ENCODE measurements at regions of chr13 and their contacts with region 1.

Region 1: GRCh38 chr13:21476893-21477472 is 17.9 kb upstream of the ZDHHC20 start:
- DNase-seq: peak; percentile 60 to 81 (median 66)
- ATAC-seq: peak; percentile 92
- H3K4me3 ChIP-seq: no peak overlapping the region
- H3K27ac ChIP-seq: no peak overlapping the region
- H3K4me1 ChIP-seq: no peaks in the 10 kb centered on the region
- H3K27me3 ChIP-seq: no peaks in the 10 kb centered on the region
- CTCF ChIP-seq: peak; percentile 77 to 86 (median 85)
- EP300 ChIP-seq: no peak
- POLR2A ChIP-seq: no peak
- RAD21 ChIP-seq: peak; percentile 35 to 69; a peak in 3 of 4 replicates

Region 2: GRCh38 chr13:20495082-20496023 is 981.6 kb before region 1 on chr13:
- CTCF ChIA-PET with region 1: no interaction called
- POLR2A ChIA-PET with region 1: no interaction called
- in situ Hi-C with region 1: no loop called
- intact Hi-C with region 1: loop called (anchors 5 kb)
- DNase-seq: peak; percentile 50 to 57 (median 53)
- ATAC-seq: peak; percentile 77
- H3K4me3 ChIP-seq: no peak overlapping the region
- H3K27ac ChIP-seq: no peak overlapping the region; the same call in 2 of the 3 replicates
- H3K4me1 ChIP-seq: peaks cover 0 to 6% of the 10 kb centered on the region in 2 experiments; a peak in 2 of 5 replicates
- H3K27me3 ChIP-seq: no peaks in the 10 kb centered on the region
- CTCF ChIP-seq: peak; percentile 67 to 82 (median 73)
- EP300 ChIP-seq: no peak
- POLR2A ChIP-seq: no peak
- RAD21 ChIP-seq: peak; percentile 79 to 83

Region 3: GRCh38 chr13:20945952-20946383 is 531.0 kb before region 1 on chr13:
- CTCF ChIA-PET with region 1: interaction called, 5 read pairs
- POLR2A ChIA-PET with region 1: no interaction called
- in situ Hi-C with region 1: loop called (anchors 10 kb)
- intact Hi-C with region 1: loop called (anchors 2 kb)
- DNase-seq: no peak
- ATAC-seq: peak; percentile 42; the same call in 1 of the 3 replicates
- H3K4me3 ChIP-seq: no peak overlapping the region
- H3K27ac ChIP-seq: no peak overlapping the region
- H3K4me1 ChIP-seq: peaks cover 0 to 5% of the 10 kb centered on the region in 2 experiments; a peak in 2 of 5 replicates
- H3K27me3 ChIP-seq: 0 out of 5 replicates have a peak, but pooled peaks cover 0 to 2% of the 10 kb centered on the region in 2 experiments
- CTCF ChIP-seq: no peak
- EP300 ChIP-seq: no peak
- POLR2A ChIP-seq: no peak
- RAD21 ChIP-seq: no peak

Region 4: GRCh38 chr13:21106089-21106488 is 370.9 kb before region 1 on chr13:
- CTCF ChIA-PET with region 1: no interaction called
- POLR2A ChIA-PET with region 1: no interaction called
- in situ Hi-C with region 1: no loop called
- intact Hi-C with region 1: loop called (anchors 10 kb)
- DNase-seq: no peak
- ATAC-seq: no peak
- H3K4me3 ChIP-seq: no peak overlapping the region
- H3K27ac ChIP-seq: no peak overlapping the region
- H3K4me1 ChIP-seq: peaks cover 0 to 2% of the 10 kb centered on the region in 2 experiments; a peak in 1 of 5 replicates
- H3K27me3 ChIP-seq: no peaks in the 10 kb centered on the region
- CTCF ChIP-seq: no peak
- EP300 ChIP-seq: no peak
- POLR2A ChIP-seq: no peak
- RAD21 ChIP-seq: no peak

Region 5: DNA sequence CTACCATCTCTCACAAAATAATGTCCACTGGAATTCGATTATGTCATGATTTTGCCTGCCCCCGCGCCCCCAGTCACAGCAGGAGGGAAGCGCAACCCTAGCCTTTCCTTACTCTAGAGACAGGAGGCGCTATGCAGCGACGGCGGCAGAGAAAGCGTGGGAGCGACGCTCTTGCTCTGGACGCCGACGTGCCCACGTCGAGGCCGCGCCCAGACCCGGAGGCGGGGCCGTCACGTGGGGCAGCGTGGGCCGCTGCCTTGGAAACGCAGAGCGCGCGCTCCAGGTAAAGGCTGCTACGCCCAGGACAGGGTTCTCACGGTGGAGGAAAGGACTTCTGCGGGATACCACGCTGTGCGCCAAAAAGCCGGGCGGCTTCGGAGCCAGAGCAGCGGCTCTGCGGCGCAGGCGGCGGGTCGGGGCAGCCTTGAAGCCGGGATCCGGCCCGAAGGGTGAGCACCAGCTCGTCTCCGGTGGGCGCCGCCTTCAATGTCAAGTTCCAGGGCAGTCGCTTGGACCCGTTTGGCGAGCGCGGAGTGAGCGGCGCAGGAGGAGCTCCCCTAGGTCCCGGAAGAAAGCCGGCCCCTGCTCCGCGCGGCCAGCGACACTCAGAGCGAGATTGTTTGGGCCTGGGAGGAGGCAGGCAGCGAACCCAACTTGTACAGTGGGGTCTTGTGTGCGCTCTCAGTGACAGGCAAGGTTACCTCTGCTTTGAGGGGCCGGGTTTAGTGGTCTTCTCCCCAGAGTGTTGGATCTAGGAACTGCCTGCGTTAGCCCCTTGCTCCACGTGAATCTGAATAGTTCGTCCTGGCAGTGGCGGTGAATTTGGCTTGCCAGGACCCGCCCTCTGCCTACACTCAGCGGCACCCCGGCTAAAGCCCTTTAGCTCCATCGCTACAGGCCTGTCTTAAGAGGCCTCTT is 178.8 kb before region 1 on chr13:
- CTCF ChIA-PET with region 1: interaction called, 6 read pairs
- POLR2A ChIA-PET with region 1: no interaction called
- in situ Hi-C with region 1: loop called (anchors 5 kb)
- intact Hi-C with region 1: loop called (anchors 1 kb)
- DNase-seq: peak; percentile 83 to 92 (median 85)
- ATAC-seq: peak; percentile 97
- H3K4me3 ChIP-seq: peak overlapping the region; percentile 86
- H3K27ac ChIP-seq: peak overlapping the region; percentile 26; the same call in 1 of the 3 replicates
- H3K4me1 ChIP-seq: peaks cover 0 to 4% of the 10 kb centered on the region in 2 experiments; a peak in 1 of 5 replicates
- H3K27me3 ChIP-seq: no peaks in the 10 kb centered on the region
- CTCF ChIP-seq: peak; percentile 81 to 83 (median 82)
- EP300 ChIP-seq: no peak
- POLR2A ChIP-seq: no peak; the same call in 1 of the 2 replicates
- RAD21 ChIP-seq: peak in 1 of 2 experiments; percentile 16; a peak in 1 of 4 replicates

Region 6: GRCh38 chr13:21344662-21345176 is 132.3 kb before region 1 on chr13:
- CTCF ChIA-PET with region 1: no interaction called
- POLR2A ChIA-PET with region 1: no interaction called
- in situ Hi-C with region 1: no loop called
- intact Hi-C with region 1: loop called (anchors 5 kb)
- DNase-seq: no peak
- ATAC-seq: peak; percentile 21; the same call in 2 of the 3 replicates
- H3K4me3 ChIP-seq: no peak overlapping the region
- H3K27ac ChIP-seq: no peak overlapping the region
- H3K4me1 ChIP-seq: no peaks in the 10 kb centered on the region; a peak in 1 of 5 replicates
- H3K27me3 ChIP-seq: peaks cover 0 to 8% of the 10 kb centered on the region in 2 experiments; a peak in 3 of 5 replicates
- CTCF ChIP-seq: no peak
- EP300 ChIP-seq: no peak
- POLR2A ChIP-seq: no peak
- RAD21 ChIP-seq: no peak

Region 7: DNA sequence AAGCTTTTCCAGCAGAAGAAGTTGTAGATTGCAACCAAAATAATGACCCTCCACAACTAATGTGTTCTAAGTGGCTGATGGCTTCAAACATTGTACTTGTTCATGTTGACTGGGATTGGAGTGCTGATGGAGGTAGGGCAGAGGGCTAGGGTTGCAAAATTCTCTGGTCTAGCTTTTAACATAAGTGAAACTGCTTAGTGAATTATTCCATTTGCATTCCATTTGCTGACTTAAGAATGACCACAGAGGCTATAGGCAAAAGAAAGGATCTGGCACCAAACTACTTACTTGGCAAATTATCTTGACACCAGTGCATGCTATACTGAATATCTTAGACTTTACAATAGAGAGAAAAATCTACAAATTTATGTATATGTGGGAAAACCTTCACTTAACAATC is 480.9 kb after region 1 on chr13:
- CTCF ChIA-PET with region 1: no interaction called
- POLR2A ChIA-PET with region 1: no interaction called
- in situ Hi-C with region 1: no loop called
- intact Hi-C with region 1: no loop called
- DNase-seq: no peak
- ATAC-seq: no peak
- H3K4me3 ChIP-seq: no peak overlapping the region
- H3K27ac ChIP-seq: no peak overlapping the region
- H3K4me1 ChIP-seq: no peaks in the 10 kb centered on the region
- H3K27me3 ChIP-seq: no peaks in the 10 kb centered on the region
- CTCF ChIP-seq: no peak
- EP300 ChIP-seq: no peak
- POLR2A ChIP-seq: no peak
- RAD21 ChIP-seq: no peak

Region 8: DNA sequence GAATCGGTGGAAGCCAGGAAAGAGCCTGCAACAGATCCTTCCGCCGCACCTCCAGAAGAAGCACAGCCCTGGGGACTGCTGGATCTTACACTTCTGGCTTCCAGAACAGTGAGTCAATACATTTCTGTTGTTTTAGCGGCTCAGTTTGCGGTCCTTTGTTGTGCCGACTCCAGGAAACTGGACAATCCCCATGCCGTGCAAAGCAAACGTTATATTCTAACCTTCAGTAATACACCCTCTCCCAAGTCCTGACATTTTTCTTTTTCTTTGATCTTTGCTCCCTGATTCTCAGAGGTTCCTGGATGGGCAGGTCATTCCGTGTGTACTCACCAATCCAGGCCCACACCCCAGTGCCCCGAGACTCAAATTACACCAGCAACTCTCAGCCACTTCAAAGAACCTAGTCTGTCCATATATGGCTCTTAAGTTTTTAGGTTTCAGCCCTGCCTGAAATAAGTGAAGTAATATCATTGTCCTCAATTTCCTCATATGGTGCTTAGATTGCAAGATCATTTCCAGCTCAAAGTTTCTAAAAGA is 1316.7 kb after region 1 on chr13:
- CTCF ChIA-PET with region 1: no interaction called
- POLR2A ChIA-PET with region 1: no interaction called
- in situ Hi-C with region 1: loop called (anchors 25 kb)
- intact Hi-C with region 1: no loop called
- DNase-seq: no peak
- ATAC-seq: no peak
- H3K4me3 ChIP-seq: no peak overlapping the region
- H3K27ac ChIP-seq: no peak overlapping the region
- H3K4me1 ChIP-seq: no peaks in the 10 kb centered on the region
- H3K27me3 ChIP-seq: peaks cover 5 to 10% of the 10 kb centered on the region in 2 experiments; a peak in 3 of 5 replicates
- CTCF ChIP-seq: no peak
- EP300 ChIP-seq: no peak
- POLR2A ChIP-seq: no peak
- RAD21 ChIP-seq: no peak